ENCODE measurements at regions of chr15 and their contacts with region 1.

Region 1: GRCh38 chr15:39624806-39625205 is 43.9 kb downstream of the THBS1 start:
- DNase-seq: peak; percentile 88
- H3K4me3 Mint-ChIP-seq: peak overlapping the region; percentile 71
- H3K27ac Mint-ChIP-seq: peak overlapping the region; percentile 99
- H3K4me1 Mint-ChIP-seq: peaks cover 81% of the 10 kb centered on the region
- H3K27me3 Mint-ChIP-seq: no peaks in the 10 kb centered on the region

Region 2: GRCh38 chr15:38610748-38611147 is 1014.1 kb before region 1 on chr15:
- CTCF ChIA-PET with region 1: no interaction called
- POLR2A ChIA-PET with region 1: interaction called, 11 read pairs
- DNase-seq: peak; percentile 65
- H3K4me3 Mint-ChIP-seq: peak overlapping the region; percentile 61
- H3K27ac Mint-ChIP-seq: peak overlapping the region; percentile 99
- H3K4me1 Mint-ChIP-seq: peaks cover 71% of the 10 kb centered on the region
- H3K27me3 Mint-ChIP-seq: no peaks in the 10 kb centered on the region

Region 3: DNA sequence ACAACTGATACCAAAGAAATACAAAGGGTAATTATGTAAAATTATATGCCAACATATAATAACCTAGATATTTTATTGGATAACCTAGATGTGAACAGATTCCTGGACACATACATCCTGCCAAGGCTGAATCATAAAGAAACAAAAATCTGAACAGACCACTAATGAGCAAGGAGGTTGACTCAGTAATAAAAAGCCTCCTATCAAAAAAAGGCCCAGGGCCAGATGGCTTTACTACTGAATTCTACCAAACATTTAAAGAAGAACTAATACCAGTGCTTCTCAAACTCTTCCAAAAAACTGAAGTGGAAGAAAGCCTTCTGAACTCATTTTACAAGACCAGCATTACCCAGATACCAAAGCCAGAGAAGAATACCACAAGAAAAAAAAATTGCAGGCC is 11.5 kb before region 1 on chr15:
- CTCF ChIA-PET with region 1: interaction called, 7 read pairs
- POLR2A ChIA-PET with region 1: interaction called, 21 read pairs
- DNase-seq: no peak
- H3K4me3 Mint-ChIP-seq: no peak overlapping the region
- H3K27ac Mint-ChIP-seq: no peak overlapping the region
- H3K4me1 Mint-ChIP-seq: peaks cover 23% of the 10 kb centered on the region
- H3K27me3 Mint-ChIP-seq: peaks cover 5% of the 10 kb centered on the region

Region 4: DNA sequence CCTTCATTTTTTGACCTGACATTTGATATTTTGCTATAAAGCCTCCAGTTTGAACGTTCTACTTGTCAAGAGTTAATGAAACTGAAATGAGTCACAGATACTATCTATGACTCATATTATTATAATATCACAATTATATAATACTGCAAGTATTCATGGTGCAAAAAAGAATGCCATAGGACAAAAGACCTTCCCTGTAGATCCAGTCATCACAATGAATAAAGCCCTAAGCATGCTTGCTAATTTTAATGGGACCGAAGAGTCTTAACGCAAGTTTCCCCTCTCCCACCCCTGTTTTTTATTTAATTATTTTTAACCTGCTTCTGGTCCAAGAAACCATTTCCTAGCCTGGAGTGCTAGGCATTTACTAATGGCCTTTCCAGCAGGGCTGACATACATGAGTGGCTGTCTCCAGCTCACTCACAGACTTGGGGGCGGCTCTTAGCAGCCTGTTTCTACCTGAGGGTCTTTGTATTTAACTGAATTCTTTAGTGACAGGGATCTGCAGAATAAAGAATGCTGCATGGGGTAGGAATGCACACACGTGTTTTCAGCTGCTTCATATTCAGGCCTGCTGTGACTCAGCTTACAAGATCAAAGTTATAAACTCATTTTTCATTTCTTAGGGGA is 17.3 kb after region 1 on chr15:
- CTCF ChIA-PET with region 1: interaction called, 6 read pairs
- POLR2A ChIA-PET with region 1: interaction called, 18 read pairs
- DNase-seq: no peak
- H3K4me3 Mint-ChIP-seq: no peak overlapping the region
- H3K27ac Mint-ChIP-seq: no peak overlapping the region
- H3K4me1 Mint-ChIP-seq: peaks cover 19% of the 10 kb centered on the region
- H3K27me3 Mint-ChIP-seq: peaks cover 6% of the 10 kb centered on the region

Region 5: DNA sequence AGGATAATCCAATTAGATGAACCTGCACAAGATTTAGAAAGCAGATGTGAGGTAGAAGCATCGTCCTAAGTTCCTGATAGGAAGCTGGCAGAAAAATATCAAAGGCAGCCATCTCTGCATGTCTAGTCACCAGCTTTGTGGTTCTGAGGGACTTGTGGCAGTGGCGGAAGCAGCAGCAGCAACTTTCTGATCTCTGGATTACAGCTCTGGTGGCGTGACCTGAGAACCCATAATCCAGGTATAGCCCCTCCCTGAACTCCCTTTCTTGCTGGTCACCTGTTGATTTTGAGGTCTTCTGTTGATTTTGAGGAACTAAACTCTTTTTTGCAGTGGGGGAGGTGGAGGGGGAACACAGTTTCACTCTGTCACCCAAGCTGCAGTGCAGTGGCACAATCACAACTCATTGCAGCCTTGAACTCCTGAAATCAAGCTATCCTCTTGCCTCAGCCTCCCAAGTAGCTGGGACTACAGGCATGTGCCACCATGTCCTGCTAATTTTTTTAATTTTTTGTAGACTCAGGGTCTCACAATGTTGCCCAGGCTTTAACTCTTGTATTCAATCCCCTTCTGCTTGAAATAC is 150.0 kb after region 1 on chr15:
- CTCF ChIA-PET with region 1: interaction called, 4 read pairs
- POLR2A ChIA-PET with region 1: interaction called, 11 read pairs
- DNase-seq: peak; percentile 75
- H3K4me3 Mint-ChIP-seq: no peak overlapping the region
- H3K27ac Mint-ChIP-seq: peak overlapping the region; percentile 57
- H3K4me1 Mint-ChIP-seq: peaks cover 24% of the 10 kb centered on the region
- H3K27me3 Mint-ChIP-seq: peaks cover 7% of the 10 kb centered on the region

Region 6: GRCh38 chr15:39782441-39783138 is 157.8 kb after region 1 on chr15 and contains the start of gene FSIP1:
- CTCF ChIA-PET with region 1: interaction called, 3 read pairs
- POLR2A ChIA-PET with region 1: interaction called, 18 read pairs
- DNase-seq: peak; percentile 97
- H3K4me3 Mint-ChIP-seq: peak within 1 kb of the TSS; percentile 88
- H3K27ac Mint-ChIP-seq: peak within 1 kb of the TSS; percentile 89
- H3K4me1 Mint-ChIP-seq: peaks cover 48% of the 10 kb centered on the region
- H3K27me3 Mint-ChIP-seq: peaks cover 2% of the 10 kb centered on the region
- total RNA-seq, gene FSIP1: 0.58 to 0.88 TPM

Measured in activated CD4-positive, alpha-beta memory T cell treated with anti-CD3 and anti-CD28 coated beads, Interleukin-2, amount 10 ng/mL, durations not matched to agents 7 days and 5 days (primary cell).